ENCODE measurements at regions of chr2 and their contacts with region 1.

Region 1: DNA sequence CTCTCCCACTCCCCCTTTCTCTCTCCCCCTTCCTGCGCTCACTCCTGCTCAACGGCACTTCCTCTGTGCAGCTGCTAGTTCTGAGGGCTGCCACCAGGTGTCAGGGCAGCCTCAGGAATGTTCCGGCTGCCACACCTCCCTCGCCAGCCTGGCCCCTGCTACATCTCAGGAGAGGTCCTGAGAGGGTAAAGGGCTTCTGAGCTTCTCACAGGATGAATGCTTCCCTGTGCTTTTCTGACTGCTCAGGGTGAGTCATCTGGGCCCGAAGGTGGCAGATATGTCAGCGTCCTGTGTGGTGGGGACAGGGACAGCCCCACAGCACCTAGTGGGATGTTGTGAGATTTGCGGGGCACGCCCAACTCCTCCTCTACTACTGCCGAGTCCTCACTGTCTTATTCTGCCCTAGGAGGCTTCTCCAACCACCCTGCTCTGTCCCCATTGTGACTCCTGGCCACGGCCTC is 49.0 kb downstream of the PLEKHB2 start:
- DNase-seq: peak; percentile 38
- ATAC-seq: peak; percentile 92
- H3K4me3 ChIP-seq: no peak overlapping the region
- H3K27ac ChIP-seq: no peak overlapping the region
- H3K4me1 ChIP-seq: no peaks in the 10 kb centered on the region; the same call in 1 of the 2 replicates
- H3K27me3 ChIP-seq: no peaks in the 10 kb centered on the region
- CTCF ChIP-seq: peak; percentile 91

Region 2: GRCh38 chr2:131413148-131413747 is 259.1 kb after region 1 on chr2:
- CTCF ChIA-PET with region 1: no interaction called
- POLR2A ChIA-PET with region 1: no interaction called
- in situ Hi-C with region 1: no loop called
- intact Hi-C with region 1: loop called (anchors 5 kb)
- DNase-seq: peak; percentile 47
- ATAC-seq: peak; percentile 86
- H3K4me3 ChIP-seq: no peak overlapping the region
- H3K27ac ChIP-seq: no peak overlapping the region
- H3K4me1 ChIP-seq: peaks cover 6% of the 10 kb centered on the region; the same call in 1 of the 2 replicates
- H3K27me3 ChIP-seq: peaks cover 25% of the 10 kb centered on the region
- CTCF ChIP-seq: peak; percentile 82

Measured in Panc1 (cell line).